CD8-positive, alpha-beta memory T cell (primary cell): ENCODE measurements at regions of chr18 and their contacts with region 1.

Region 1: DNA sequence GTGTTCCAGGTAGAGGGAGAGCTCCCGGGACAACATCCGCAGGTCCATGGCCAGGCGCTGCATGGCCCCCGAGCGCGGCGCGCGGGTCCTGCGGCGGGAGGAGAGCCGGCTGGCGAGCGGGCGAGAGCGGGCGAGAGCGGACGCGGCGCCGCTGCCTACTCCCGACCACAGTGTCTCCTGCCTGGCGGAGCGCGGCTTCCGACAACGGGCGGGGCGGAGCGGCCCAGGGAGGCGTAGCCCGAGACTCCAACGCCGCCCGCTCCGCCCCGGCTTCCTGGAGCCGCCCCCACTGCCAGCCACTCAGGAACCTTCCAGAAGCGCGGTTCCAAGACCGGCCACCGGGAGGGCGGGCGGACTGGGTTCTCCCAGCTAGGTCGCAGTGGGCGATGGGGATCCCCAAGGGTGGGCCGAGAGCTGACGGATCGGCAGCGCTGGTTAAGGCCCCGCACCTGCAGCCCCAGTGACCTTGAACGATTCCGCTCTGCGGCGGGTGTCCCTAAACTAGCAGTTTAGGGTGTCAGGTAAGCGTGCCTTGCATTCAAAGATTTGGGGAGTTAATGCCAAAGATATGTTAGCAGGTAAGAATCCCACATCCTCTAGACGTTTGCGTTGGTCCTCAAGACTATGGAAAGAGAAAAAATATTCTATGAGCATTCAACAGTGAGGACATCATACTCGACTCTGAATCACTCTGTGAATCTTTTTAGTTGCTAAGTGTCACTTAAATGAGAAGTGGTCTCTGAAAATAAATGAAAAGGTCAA is at the start of gene ABHD3:
- DNase-seq: peak; percentile 90 to 94 (median 92)
- H3K4me3 ChIP-seq: peak within 1 kb of the TSS; percentile 87
- H3K4me3 Mint-ChIP-seq: peak within 1 kb of the TSS; percentile 92 to 99 (median 98)
- H3K27ac ChIP-seq: peak within 1 kb of the TSS; percentile 89
- H3K27ac Mint-ChIP-seq: peak within 1 kb of the TSS; percentile 91 to 98 (median 96)
- H3K4me1 ChIP-seq: peaks cover 21% of the 10 kb centered on the region
- H3K4me1 Mint-ChIP-seq: peaks cover 28 to 37% (median 31%) of the 10 kb centered on the region in 3 donors
- H3K27me3 ChIP-seq: no peaks in the 10 kb centered on the region
- H3K27me3 Mint-ChIP-seq: no peaks in the 10 kb centered on the region
- total RNA-seq, gene ABHD3: 30.0 to 31.3 TPM

Region 2: DNA sequence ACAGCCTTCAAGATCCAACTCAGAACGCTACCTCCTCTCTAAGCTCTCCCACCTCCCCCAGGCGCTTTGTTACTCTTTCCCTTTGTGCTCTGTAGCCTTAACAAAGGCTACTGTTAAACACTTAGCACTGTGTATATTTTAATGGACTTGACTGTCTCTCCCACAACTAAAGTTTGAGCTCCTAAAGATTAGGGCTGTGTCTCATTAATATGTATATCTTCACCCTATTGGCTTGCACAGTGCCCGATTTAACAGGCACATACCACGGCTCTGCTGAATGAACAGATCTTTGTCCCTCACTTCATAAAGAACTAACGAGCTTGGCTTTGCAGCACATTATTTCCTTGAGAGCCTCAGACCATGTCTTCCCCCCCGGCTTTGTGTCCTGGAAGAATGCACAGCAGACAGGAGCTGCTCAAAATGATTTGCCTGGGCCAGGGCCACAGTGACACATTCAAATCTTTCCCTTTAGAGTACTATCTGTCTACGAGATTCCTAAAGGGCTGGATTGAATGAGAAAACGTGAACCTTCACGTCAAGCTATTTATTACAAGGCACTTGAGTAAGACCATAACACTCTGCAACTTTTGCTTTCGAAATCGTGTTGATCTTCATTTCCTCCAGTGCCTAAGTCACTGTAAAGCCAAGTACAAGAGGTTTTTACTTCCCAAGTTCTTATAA is 22.3 kb before region 1 on chr18:
- CTCF ChIA-PET with region 1: interaction called, 9 read pairs
- POLR2A ChIA-PET with region 1: interaction called, 11 read pairs
- DNase-seq: peak in 2 of 5 donors; percentile 34 to 57
- H3K4me3 ChIP-seq: peak overlapping the region; percentile 62
- H3K4me3 Mint-ChIP-seq: no peak overlapping the region
- H3K27ac ChIP-seq: peak overlapping the region; percentile 74
- H3K27ac Mint-ChIP-seq: no peak overlapping the region
- H3K4me1 ChIP-seq: peaks cover 16% of the 10 kb centered on the region
- H3K4me1 Mint-ChIP-seq: peaks cover 17 to 32% (median 28%) of the 10 kb centered on the region in 3 donors
- H3K27me3 ChIP-seq: no peaks in the 10 kb centered on the region
- H3K27me3 Mint-ChIP-seq: no peaks in the 10 kb centered on the region

Region 3: GRCh38 chr18:21727702-21728101 is 22.9 kb after region 1 on chr18:
- CTCF ChIA-PET with region 1: no interaction called
- POLR2A ChIA-PET with region 1: no interaction called
- DNase-seq: no peak
- H3K4me3 ChIP-seq: no peak overlapping the region
- H3K4me3 Mint-ChIP-seq: no peak overlapping the region
- H3K27ac ChIP-seq: no peak overlapping the region
- H3K27ac Mint-ChIP-seq: no peak overlapping the region
- H3K4me1 ChIP-seq: no peaks in the 10 kb centered on the region
- H3K4me1 Mint-ChIP-seq: peaks cover 0 to 2% (median 0%) of the 10 kb centered on the region in 3 donors
- H3K27me3 ChIP-seq: no peaks in the 10 kb centered on the region
- H3K27me3 Mint-ChIP-seq: peaks cover 0 to 7% of the 10 kb centered on the region in 2 donors

Region 4: GRCh38 chr18:21740724-21741510 is 36.1 kb after region 1 on chr18 and contains the start of gene MIB1:
- CTCF ChIA-PET with region 1: interaction called, 5 read pairs
- POLR2A ChIA-PET with region 1: interaction called, 24 read pairs
- DNase-seq: peak in 3 of 5 donors; percentile 98 to 99 (median 99)
- H3K4me3 ChIP-seq: peak within 1 kb of the TSS; percentile 86
- H3K4me3 Mint-ChIP-seq: peak within 1 kb of the TSS; percentile 85 to 98 (median 96)
- H3K27ac ChIP-seq: peak within 1 kb of the TSS; percentile 87
- H3K27ac Mint-ChIP-seq: peak within 1 kb of the TSS; percentile 82 to 99 (median 96)
- H3K4me1 ChIP-seq: peaks cover 30% of the 10 kb centered on the region
- H3K4me1 Mint-ChIP-seq: peaks cover 42 to 49% (median 47%) of the 10 kb centered on the region in 3 donors
- H3K27me3 ChIP-seq: no peaks in the 10 kb centered on the region
- H3K27me3 Mint-ChIP-seq: peaks cover 0 to 7% of the 10 kb centered on the region in 2 donors
- total RNA-seq, gene MIB1: 45.8 to 47.0 TPM